ENCODE measurements at regions of chr11 and their contacts with region 1.

Region 1: DNA sequence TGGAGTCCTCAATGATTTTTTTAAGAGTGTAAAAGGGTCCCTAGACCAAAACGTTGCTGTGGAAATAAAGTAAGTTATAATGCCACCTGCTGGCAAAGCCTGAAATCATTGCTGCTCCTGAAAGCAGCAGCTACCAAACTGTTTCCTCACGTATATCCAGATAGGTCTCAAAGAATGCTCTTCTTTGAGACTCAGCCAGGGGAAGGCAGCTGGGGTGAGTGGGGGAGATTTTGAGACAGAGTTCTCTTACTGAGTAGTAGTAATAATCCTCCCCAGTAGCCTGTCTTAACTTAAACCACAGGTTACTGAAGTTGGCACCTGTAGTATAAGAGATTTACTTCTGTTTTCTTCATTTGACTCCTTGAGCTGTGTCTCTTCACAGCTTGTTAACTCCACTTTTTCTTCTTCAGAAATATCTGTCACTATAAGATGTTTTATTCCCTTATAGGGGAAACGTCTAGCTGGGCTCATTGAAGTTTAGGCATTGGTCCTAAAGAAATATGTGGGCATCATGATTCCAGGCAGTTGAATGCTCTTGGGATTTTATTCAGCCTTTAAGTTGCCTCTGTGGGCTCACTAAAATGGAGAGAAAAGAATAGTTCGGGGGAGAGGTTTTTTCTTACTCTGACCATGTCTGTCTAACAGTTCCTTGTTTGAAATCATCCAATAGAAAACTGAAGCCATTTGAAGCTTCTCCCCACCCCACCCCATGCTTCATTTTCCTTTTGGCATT is 77.9 kb downstream of the BTBD10 start:
- DNase-seq: no peak
- H3K4me3 ChIP-seq: no peak overlapping the region
- H3K27ac ChIP-seq: peak overlapping the region in 1 of 4 donors; percentile 16
- H3K4me1 ChIP-seq: peaks cover 0 to 8% (median 3%) of the 10 kb centered on the region in 4 donors
- H3K27me3 ChIP-seq: no peaks in the 10 kb centered on the region
- CTCF ChIP-seq: peak; percentile 61 to 71 (median 66)
- EP300 ChIP-seq: no peak
- POLR2A ChIP-seq: no peak

Region 2: GRCh38 chr11:13462901-13463778 is 78.1 kb after region 1 on chr11 and contains the start of gene BTBD10:
- intact Hi-C with region 1: loop called (anchors 5 kb)
- DNase-seq: peak; percentile 96
- H3K4me3 ChIP-seq: peak within 1 kb of the TSS; percentile 76 to 89 (median 80)
- H3K27ac ChIP-seq: peak within 1 kb of the TSS; percentile 88 to 91 (median 90)
- H3K4me1 ChIP-seq: peaks cover 18 to 29% (median 23%) of the 10 kb centered on the region in 4 donors
- H3K27me3 ChIP-seq: no peaks in the 10 kb centered on the region
- CTCF ChIP-seq: no peak
- EP300 ChIP-seq: no peak
- POLR2A ChIP-seq: peak; percentile 66
- total RNA-seq, gene BTBD10: 33.4 to 59.8 (median 48.7) TPM

Measured in esophagus muscularis mucosa (tissue), 4 donors.